H1 (cell line): ENCODE measurements at regions of chr1 and their contacts with region 1.

Region 1: DNA sequence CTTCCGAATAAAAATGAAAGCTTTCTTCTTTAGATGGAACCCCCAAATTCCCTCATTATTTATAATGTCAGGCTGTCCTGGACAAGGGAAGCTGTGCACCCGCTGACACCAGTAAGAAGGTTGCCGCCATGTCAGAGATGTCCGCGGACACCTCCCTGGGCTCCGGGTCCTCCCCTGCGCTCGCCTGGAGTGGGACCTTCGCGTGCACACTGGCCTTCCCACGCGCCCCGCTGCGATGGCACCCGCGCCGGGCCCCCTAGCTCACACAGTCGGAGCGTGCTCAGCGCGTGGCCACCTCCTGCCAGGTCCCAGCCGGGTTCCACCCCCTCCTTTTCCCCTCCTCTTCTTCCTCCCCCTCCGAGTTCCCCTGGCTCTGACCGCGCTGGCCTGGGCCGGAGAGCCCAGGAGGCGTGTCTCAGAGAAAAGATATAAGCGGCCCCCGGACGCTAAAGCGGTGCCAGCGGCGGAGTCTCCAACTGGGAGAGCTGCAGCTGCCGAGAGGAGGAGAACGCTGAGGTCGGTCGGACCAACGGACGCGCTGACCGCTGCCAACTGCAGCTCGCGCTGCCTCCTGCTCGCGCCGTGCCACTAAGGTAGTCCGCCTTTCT is at the start of gene G0S2:
- DNase-seq: peak in 1 of 2 experiments; percentile 71
- H3K4me3 ChIP-seq: peak within 1 kb of the TSS; percentile 40 to 64 (median 56)
- H3K27ac ChIP-seq: no peak within 1 kb of the TSS
- H3K4me1 ChIP-seq: peaks cover 0 to 4% (median 3%) of the 10 kb centered on the region in 4 experiments; a peak in 6 of 7 replicates
- H3K27me3 ChIP-seq: peaks cover 18 to 46% (median 42%) of the 10 kb centered on the region in 4 experiments
- CTCF ChIP-seq: no peak
- EP300 ChIP-seq: no peak
- POLR2A ChIP-seq: no peak
- RAD21 ChIP-seq: no peak
- total RNA-seq, gene G0S2: 1.0 and 1.7 TPM in 2 replicates

Region 2: GRCh38 chr1:209607102-209607794 is 67.8 kb before region 1 on chr1:
- CTCF ChIA-PET with region 1: interaction called, 13 read pairs
- POLR2A ChIA-PET with region 1: interaction called, 3 read pairs
- DNase-seq: no peak
- H3K4me3 ChIP-seq: no peak overlapping the region
- H3K27ac ChIP-seq: no peak overlapping the region
- H3K4me1 ChIP-seq: no peaks in the 10 kb centered on the region
- H3K27me3 ChIP-seq: no peaks in the 10 kb centered on the region
- CTCF ChIP-seq: no peak
- EP300 ChIP-seq: no peak
- POLR2A ChIP-seq: no peak
- RAD21 ChIP-seq: no peak

Region 3: DNA sequence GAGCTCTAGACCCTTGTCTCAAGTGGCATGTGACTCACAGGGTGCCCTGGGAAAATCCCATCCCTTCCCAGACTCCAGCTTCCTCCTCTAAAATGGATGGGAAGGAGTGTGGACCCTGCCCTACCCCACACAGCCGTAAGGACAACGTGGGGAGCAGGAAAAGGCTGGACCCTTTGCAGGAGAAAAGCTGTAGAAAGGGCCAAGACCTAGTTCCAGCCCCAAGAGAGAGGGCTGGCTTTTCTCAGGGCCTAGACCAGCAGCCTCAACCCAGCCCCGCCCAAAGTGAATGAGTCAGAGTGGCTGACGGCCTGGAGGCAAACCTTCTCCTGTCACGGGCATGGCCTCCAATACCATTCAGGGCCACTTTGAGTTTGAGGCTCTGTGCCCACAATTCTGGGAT is 23.9 kb before region 1 on chr1:
- CTCF ChIA-PET with region 1: interaction called, 15 read pairs
- POLR2A ChIA-PET with region 1: interaction called, 4 read pairs
- DNase-seq: no peak
- H3K4me3 ChIP-seq: no peak overlapping the region
- H3K27ac ChIP-seq: no peak overlapping the region
- H3K4me1 ChIP-seq: peaks cover 0 to 11% (median 10%) of the 10 kb centered on the region in 4 experiments; a peak in 4 of 7 replicates
- H3K27me3 ChIP-seq: 0 out of 7 replicates have a peak, but pooled peaks cover 0 to 1% (median 0%) of the 10 kb centered on the region in 4 experiments
- CTCF ChIP-seq: no peak
- EP300 ChIP-seq: no peak
- POLR2A ChIP-seq: no peak
- RAD21 ChIP-seq: no peak